ENCODE measurements at regions of chr6 and their contacts with region 1.

Region 1: DNA sequence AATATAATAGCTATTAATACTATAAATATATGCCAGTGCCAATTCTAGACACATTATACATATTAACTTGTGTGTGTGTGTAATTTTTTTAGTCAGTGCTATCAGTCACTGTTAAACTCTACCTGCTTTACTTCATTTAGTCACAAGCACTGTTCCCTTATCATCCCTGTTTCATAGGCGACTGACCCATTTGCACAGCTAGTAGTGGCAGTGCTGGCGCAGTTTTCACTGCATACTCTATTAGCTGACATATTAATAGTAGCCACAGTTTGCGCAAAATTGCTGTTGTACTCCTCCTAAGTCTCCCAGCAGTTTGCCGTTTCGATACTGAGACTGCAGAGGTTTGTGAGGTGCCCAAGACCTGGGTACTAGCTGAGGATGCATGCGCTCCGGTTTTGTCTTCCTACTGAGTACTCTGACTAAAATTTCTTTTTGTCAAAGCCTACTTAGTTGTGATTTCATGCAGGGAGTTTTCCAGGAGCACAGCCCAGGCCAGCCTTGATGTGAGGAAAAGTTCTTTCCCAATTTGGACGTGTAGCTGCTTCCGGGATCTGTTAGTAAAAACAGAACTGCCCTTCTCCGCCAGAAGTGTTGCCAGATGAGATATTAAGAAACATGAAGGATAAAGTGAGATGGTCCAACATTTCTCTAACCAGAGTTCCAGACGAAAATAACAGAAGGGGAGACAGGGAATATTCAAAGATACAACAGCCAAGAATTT is 5.6 kb downstream of the BAG2 start:
- DNase-seq: peak; percentile 29
- H3K4me3 ChIP-seq: no peak overlapping the region
- H3K27ac ChIP-seq: peak overlapping the region; percentile 90 to 94 (median 93)
- H3K4me1 ChIP-seq: peaks cover 0 to 36% (median 4%) of the 10 kb centered on the region in 4 donors
- H3K27me3 ChIP-seq: no peaks in the 10 kb centered on the region
- CTCF ChIP-seq: no peak
- EP300 ChIP-seq: no peak
- POLR2A ChIP-seq: no peak

Region 2: DNA sequence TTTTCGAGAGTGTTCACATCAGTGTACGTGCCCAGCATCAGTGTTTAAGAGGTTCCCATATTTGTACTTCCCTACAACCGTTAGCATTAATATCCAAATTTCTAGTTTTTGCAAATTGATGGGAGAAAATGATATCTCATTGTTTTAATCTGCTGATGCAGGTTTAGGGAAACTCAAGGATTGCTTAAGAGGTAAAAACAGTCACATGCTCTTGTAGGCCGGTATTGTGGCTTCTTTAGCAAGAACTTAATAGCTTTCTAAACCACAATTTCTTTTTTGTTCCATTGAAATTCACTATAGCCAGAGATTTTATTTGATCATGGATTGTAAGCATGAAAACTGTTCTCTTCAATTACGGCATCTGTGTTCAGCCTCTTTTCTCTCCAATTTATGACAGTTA is 193.3 kb before region 1 on chr6:
- in situ Hi-C with region 1: no loop called
- intact Hi-C with region 1: no loop called
- DNase-seq: no peak
- H3K4me3 ChIP-seq: no peak overlapping the region
- H3K27ac ChIP-seq: no peak overlapping the region
- H3K4me1 ChIP-seq: no peaks in the 10 kb centered on the region
- H3K27me3 ChIP-seq: no peaks in the 10 kb centered on the region
- CTCF ChIP-seq: no peak
- EP300 ChIP-seq: no peak
- POLR2A ChIP-seq: no peak

Region 3: DNA sequence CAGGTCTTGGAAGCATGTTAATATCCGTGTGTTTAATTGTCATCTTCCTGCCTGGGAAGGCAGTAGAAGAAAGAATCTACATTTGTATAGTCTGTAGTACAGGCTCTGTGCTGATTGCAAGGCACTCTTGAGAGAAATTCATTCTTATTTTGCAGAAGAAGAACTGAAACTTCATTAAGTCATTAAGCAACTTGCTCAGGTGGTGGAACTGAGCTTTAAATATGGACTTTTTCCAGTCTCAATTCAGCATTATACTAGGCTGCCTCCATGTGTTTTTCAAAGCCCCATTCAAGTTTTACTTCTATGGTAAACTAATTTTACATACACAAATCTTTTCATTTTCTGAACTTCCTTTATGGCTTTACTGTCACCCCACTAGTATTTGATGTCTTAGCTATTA is 69.0 kb before region 1 on chr6:
- in situ Hi-C with region 1: no loop called
- intact Hi-C with region 1: no loop called
- DNase-seq: no peak
- H3K4me3 ChIP-seq: no peak overlapping the region
- H3K27ac ChIP-seq: no peak overlapping the region
- H3K4me1 ChIP-seq: peaks cover 0 to 10% (median 0%) of the 10 kb centered on the region in 4 donors
- H3K27me3 ChIP-seq: no peaks in the 10 kb centered on the region
- CTCF ChIP-seq: no peak
- EP300 ChIP-seq: no peak
- POLR2A ChIP-seq: no peak

Region 4: DNA sequence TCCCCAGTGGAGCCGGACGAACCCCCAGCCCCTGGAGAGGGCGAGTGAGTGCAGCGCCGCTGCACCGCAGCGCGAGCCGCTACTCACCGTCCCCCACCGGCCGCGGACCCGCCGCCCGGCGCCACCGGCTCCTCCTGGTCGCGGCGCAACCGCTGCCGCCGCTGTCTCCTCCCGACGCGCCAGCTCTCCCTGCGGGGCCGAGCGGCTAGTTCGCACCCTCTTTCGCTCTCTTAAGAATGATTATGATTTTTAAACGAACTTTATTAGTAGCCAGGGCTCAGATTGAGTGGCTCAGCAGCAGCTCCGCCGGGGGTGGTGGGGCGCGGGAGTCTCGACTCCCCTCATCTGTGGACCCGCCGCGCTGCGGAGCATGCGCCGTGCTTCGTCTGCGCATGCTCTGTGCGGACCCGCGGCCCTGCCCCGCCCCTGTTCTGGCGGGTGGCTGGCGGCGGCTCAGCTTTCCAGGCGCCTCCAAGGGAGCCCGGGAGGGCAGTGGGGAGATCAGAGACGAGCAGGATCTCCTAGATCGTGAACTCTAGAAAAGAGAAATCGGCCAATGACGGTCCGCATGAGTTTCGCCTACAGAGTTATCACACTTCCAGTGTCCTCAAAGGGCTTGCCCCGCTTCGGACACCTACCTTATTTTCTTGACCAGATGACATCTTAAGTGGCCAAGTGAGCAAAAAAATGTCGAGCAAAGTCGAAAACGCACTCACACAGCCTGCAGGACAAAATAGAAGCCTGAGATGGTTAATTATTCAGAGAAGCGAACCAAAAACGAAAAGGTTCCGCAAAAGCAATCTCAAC is 44.4 kb after region 1 on chr6 and contains the start of gene RAB23:
- in situ Hi-C with region 1: no loop called
- intact Hi-C with region 1: loop called (anchors 5 kb)
- DNase-seq: peak; percentile 84
- H3K4me3 ChIP-seq: peak within 1 kb of the TSS; percentile 76 to 92 (median 86)
- H3K27ac ChIP-seq: peak within 1 kb of the TSS; percentile 89 to 96 (median 94)
- H3K4me1 ChIP-seq: peaks cover 2 to 32% (median 8%) of the 10 kb centered on the region in 4 donors
- H3K27me3 ChIP-seq: no peaks in the 10 kb centered on the region
- CTCF ChIP-seq: peak in 2 of 5 experiments; percentile 13 to 33
- EP300 ChIP-seq: no peak
- POLR2A ChIP-seq: peak; percentile 76
- total RNA-seq, gene RAB23: 21.7 to 28.5 (median 25.1) TPM